Activated T-helper 2 cell treated with anti-CD3 and anti-CD28 coated beads, Interferon-gamma antibody, Interleukin-2, Interleukin-4, amounts not matched to agents 10 μg/mL and 5 μg/mL and 100 μg/mL, durations not matched to agents 14 hours and 24 hours and 36 hours (primary cell): ENCODE measurements at regions of chr16 and their contacts with region 1.

Region 1: GRCh38 chr16:68843482-68844210 is at the start of gene TANGO6:
- DNase-seq: peak; percentile 87
- H3K4me3 Mint-ChIP-seq: peak within 1 kb of the TSS; percentile 95
- H3K27ac Mint-ChIP-seq: peak within 1 kb of the TSS; percentile 87
- H3K4me1 Mint-ChIP-seq: peaks cover 22% of the 10 kb centered on the region
- H3K27me3 Mint-ChIP-seq: no peaks in the 10 kb centered on the region
- total RNA-seq, gene TANGO6: 29.3 and 30.0 TPM in 2 replicates

Region 2: DNA sequence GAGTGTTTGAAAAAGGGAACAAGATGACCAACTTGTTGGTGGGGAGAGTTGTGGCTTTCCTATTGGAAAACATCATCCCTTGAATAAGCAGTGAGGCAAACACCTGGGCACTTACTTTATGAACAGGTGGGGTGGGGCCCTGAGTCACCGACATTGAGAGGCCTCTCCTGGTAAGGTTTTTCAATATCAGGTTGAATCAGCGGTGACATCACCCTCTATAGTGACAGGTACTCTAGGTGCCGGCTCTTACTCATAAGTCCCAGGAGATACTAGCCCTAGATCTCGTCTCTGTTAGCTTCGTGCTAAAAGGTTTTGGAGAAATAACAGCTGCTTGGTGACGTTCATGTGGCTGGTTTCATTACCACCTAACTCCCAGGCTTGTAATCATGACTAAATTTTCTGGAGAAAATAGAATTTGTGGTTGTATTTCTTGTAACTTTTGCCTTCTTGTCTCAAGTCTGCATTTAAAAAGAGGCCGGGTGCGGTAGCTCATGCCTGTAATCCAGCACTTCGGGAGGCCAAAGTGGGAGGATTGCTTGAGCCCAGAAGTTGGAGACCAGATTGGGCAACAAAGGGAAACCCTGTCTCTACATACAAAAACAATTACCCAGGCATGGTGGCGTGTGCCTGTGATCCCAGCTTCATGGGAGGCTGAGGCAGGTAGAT is 87.3 kb before region 1 on chr16:
- intact Hi-C with region 1: loop called (anchors 2 kb)
- DNase-seq: peak; percentile 55
- H3K4me3 Mint-ChIP-seq: peak overlapping the region; percentile 9
- H3K27ac Mint-ChIP-seq: peak overlapping the region; percentile 89
- H3K4me1 Mint-ChIP-seq: peaks cover 63% of the 10 kb centered on the region
- H3K27me3 Mint-ChIP-seq: no peaks in the 10 kb centered on the region

Region 3: GRCh38 chr16:69123910-69124309 is 280.3 kb after region 1 on chr16:
- intact Hi-C with region 1: loop called (anchors 1 kb)
- DNase-seq: peak; percentile 49
- H3K4me3 Mint-ChIP-seq: no peak overlapping the region
- H3K27ac Mint-ChIP-seq: no peak overlapping the region
- H3K4me1 Mint-ChIP-seq: peaks cover 6% of the 10 kb centered on the region
- H3K27me3 Mint-ChIP-seq: no peaks in the 10 kb centered on the region

Region 4: GRCh38 chr16:69132424-69133252 is 289.0 kb after region 1 on chr16 and contains the starts of genes CHTF8 and UTP4:
- intact Hi-C with region 1: loop called (anchors 2 kb)
- DNase-seq: peak; percentile 86
- H3K4me3 Mint-ChIP-seq: peak within 1 kb of the TSS; percentile 97
- H3K27ac Mint-ChIP-seq: peak within 1 kb of the TSS; percentile 89
- H3K4me1 Mint-ChIP-seq: peaks cover 44% of the 10 kb centered on the region
- H3K27me3 Mint-ChIP-seq: no peaks in the 10 kb centered on the region
- total RNA-seq, gene CHTF8: 121 and 138 TPM in 2 replicates
- total RNA-seq, gene UTP4: 104 and 107 TPM in 2 replicates

Region 5: GRCh38 chr16:69761983-69762813 is 918.6 kb after region 1 on chr16 and contains the start of gene WWP2:
- intact Hi-C with region 1: loop called (anchors 10 kb)
- DNase-seq: peak; percentile 66
- H3K4me3 Mint-ChIP-seq: peak within 1 kb of the TSS; percentile 91
- H3K27ac Mint-ChIP-seq: peak within 1 kb of the TSS; percentile 96
- H3K4me1 Mint-ChIP-seq: peaks cover 23% of the 10 kb centered on the region
- H3K27me3 Mint-ChIP-seq: no peaks in the 10 kb centered on the region
- total RNA-seq, gene WWP2: 59.0 and 61.7 TPM in 2 replicates